OCI-LY7 (cell line): ENCODE measurements at regions of chr17 and their contacts with region 1.

Region 1: DNA sequence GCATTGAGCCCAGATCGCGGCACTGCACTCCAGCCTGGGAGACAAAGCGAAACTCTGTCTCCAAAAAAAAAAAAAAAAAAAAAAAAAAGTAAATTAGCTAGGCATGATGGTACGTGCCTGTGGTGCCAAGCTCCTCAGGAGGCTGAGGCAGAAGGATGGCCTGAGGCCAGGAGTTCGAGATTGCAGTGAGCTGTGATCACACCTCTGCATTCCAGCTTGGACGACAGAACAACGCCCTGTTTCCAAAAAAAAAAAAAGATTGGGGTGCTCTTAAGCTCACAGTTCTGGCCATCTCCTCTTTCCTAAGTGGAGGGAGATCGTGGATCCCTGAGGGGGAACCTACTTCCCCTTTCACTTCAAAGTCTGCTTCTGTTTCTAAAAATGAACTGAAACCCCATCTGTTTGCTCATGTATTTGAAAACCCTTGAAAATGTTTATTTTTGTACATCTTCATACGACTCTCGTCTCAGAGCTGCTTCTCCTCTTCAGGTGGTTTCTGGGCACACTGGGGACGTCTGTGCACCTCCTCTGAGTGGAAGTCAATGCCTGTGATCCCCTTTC is 138.8 kb downstream of the PRKCA start:
- DNase-seq: peak; percentile 91
- H3K4me3 ChIP-seq: peak overlapping the region; percentile 61
- H3K27ac ChIP-seq: peak overlapping the region; percentile 97
- H3K4me1 ChIP-seq: peaks cover 85% of the 10 kb centered on the region
- CTCF ChIP-seq: no peak

Region 2: DNA sequence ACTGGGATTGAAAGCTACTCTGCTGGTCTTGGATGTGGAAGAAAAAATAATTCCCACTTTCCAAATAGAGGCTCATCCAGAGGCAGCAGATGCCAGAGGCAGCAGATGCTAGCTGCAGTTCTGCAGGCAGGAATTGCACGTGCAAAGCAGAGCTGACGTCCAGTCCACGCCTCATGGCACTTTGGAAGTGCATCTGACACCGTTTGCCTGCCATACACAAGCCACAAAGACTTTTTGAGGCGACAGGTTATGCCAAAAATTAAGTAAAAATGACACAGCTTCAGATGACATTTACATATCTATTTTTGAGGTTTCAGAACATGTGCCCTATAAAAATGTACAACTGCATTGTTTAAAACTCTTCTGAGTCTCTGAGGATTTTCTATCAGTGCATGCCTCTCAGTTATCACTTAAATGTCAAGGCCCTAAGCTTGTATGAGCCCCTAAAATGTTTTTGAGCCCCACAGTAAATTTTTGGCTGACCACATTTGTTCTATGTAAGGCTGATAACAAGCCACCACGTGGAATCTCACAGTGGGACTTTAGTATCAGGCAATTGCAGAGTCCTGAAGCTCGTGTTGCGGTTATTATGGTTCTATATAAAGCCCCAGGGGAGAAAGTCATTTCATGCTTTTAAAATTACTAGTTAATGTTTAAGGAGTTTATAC is 100.4 kb after region 1 on chr17:
- CTCF ChIA-PET with region 1: no interaction called
- POLR2A ChIA-PET with region 1: interaction called, 9 read pairs
- intact Hi-C with region 1: loop called (anchors 1 kb)
- DNase-seq: peak; percentile 41
- H3K4me3 ChIP-seq: no peak overlapping the region
- H3K27ac ChIP-seq: peak overlapping the region; percentile 59
- H3K4me1 ChIP-seq: peaks cover 38% of the 10 kb centered on the region
- CTCF ChIP-seq: no peak

Region 3: GRCh38 chr17:66567234-66568170 is 126.3 kb after region 1 on chr17:
- CTCF ChIA-PET with region 1: no interaction called
- POLR2A ChIA-PET with region 1: no interaction called
- intact Hi-C with region 1: loop called (anchors 1 kb)
- DNase-seq: peak; percentile 73
- H3K4me3 ChIP-seq: no peak overlapping the region
- H3K27ac ChIP-seq: no peak overlapping the region
- H3K4me1 ChIP-seq: no peaks in the 10 kb centered on the region
- CTCF ChIP-seq: peak; percentile 93

Region 4: GRCh38 chr17:66702106-66702872 is 261.1 kb after region 1 on chr17:
- CTCF ChIA-PET with region 1: no interaction called
- POLR2A ChIA-PET with region 1: no interaction called
- intact Hi-C with region 1: loop called (anchors 10 kb)
- DNase-seq: no peak
- H3K4me3 ChIP-seq: no peak overlapping the region
- H3K27ac ChIP-seq: no peak overlapping the region
- H3K4me1 ChIP-seq: peaks cover 35% of the 10 kb centered on the region
- CTCF ChIP-seq: no peak